ENCODE measurements at regions of chr3 and their contacts with region 1.

Region 1: GRCh38 chr3:107938143-107938542 is 152.7 kb downstream of the CD47 start:
- DNase-seq: peak; percentile 21
- H3K4me3 Mint-ChIP-seq: no peak overlapping the region
- H3K27ac Mint-ChIP-seq: no peak overlapping the region
- H3K4me1 Mint-ChIP-seq: peaks cover 20% of the 10 kb centered on the region
- H3K27me3 Mint-ChIP-seq: no peaks in the 10 kb centered on the region

Region 2: GRCh38 chr3:107969994-107970819 is 32.1 kb after region 1 on chr3:
- CTCF ChIA-PET with region 1: interaction called, 3 read pairs
- intact Hi-C with region 1: loop called (anchors 1 kb)
- DNase-seq: peak; percentile 27
- H3K4me3 Mint-ChIP-seq: no peak overlapping the region
- H3K27ac Mint-ChIP-seq: no peak overlapping the region
- H3K4me1 Mint-ChIP-seq: peaks cover 22% of the 10 kb centered on the region
- H3K27me3 Mint-ChIP-seq: no peaks in the 10 kb centered on the region

Region 3: GRCh38 chr3:108124337-108125152 is 186.4 kb after region 1 on chr3:
- CTCF ChIA-PET with region 1: no interaction called
- intact Hi-C with region 1: loop called (anchors 2 kb)
- DNase-seq: peak; percentile 84
- H3K4me3 Mint-ChIP-seq: peak overlapping the region; percentile 90
- H3K27ac Mint-ChIP-seq: peak overlapping the region; percentile 100
- H3K4me1 Mint-ChIP-seq: peaks cover 56% of the 10 kb centered on the region
- H3K27me3 Mint-ChIP-seq: no peaks in the 10 kb centered on the region

Region 4: DNA sequence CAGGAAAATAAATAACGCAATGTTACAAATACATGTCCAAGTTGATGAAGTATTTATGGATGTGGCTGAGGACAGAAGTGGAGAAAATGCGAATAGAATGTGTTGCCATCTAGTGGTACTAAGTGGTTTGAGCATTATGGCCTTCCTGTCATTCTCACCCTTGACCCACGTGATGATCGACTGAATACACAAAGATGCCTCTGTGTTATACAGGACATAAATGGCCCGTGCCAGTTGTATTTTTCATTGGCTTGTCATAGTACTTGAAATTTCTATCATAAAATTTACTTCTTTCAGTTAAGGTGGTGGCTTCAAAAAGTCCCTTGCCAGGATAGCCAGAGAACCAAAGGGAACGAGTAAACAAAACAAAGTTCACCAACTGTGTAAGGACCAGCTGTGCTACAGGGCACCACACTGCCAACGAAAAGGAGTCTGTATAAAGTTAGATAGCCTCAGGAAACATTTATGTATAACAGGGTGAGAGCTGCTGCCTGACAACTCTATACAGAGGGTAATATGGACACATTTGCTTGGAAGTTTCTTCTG is 468.6 kb after region 1 on chr3:
- CTCF ChIA-PET with region 1: interaction called, 4 read pairs
- intact Hi-C with region 1: loop called (anchors 1 kb)
- DNase-seq: peak; percentile 25
- H3K4me3 Mint-ChIP-seq: no peak overlapping the region
- H3K27ac Mint-ChIP-seq: no peak overlapping the region
- H3K4me1 Mint-ChIP-seq: peaks cover 2% of the 10 kb centered on the region
- H3K27me3 Mint-ChIP-seq: peaks cover 3% of the 10 kb centered on the region

Region 5: DNA sequence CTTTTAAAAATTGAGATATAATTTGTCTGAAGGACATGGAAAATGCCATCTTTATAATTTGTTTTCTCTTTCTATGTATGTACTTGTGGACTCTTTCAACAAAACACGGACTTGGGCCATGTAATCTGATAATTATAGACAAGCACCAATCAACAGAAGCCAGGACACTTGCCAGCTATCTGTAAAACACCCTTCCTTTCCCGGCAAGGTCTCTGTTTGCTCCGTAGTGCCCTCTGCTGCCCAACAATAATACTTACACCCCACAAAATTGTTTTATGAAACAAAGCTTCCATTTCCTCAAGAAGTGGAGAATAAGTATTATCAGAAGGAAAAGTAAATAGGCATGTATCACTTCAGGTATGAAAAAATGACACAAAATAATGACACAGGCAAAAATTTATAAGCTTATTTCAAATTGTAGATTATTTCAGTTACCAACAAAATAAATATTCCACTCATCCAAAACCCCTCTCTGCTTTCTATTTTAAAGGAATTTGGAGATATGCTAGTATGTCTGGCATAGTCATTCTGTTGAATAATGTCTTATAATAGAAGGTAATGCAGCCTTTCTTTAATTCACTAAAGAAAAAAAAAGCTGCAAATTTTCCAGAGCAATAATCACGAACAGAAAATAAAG is 539.5 kb after region 1 on chr3:
- CTCF ChIA-PET with region 1: interaction called, 5 read pairs
- intact Hi-C with region 1: loop called (anchors 1 kb)
- DNase-seq: peak; percentile 75
- H3K4me3 Mint-ChIP-seq: no peak overlapping the region
- H3K27ac Mint-ChIP-seq: no peak overlapping the region
- H3K4me1 Mint-ChIP-seq: no peaks in the 10 kb centered on the region
- H3K27me3 Mint-ChIP-seq: no peaks in the 10 kb centered on the region